ENCODE measurements at regions of chr3 and their contacts with region 1.

Region 1: GRCh38 chr3:128497387-128498126 is 4.6 kb upstream of the GATA2 start:
- DNase-seq: peak; percentile 31 to 83 (median 63)
- ATAC-seq: peak; percentile 64
- H3K4me3 ChIP-seq: peak overlapping the region; percentile 47 to 52
- H3K4me3 Mint-ChIP-seq: peak overlapping the region; percentile 80
- H3K27ac ChIP-seq: no peak overlapping the region
- H3K27ac Mint-ChIP-seq: no peak overlapping the region
- H3K4me1 ChIP-seq: peaks cover 9% of the 10 kb centered on the region
- H3K4me1 Mint-ChIP-seq: peaks cover 9% of the 10 kb centered on the region
- H3K27me3 ChIP-seq: peaks cover 18 to 19% of the 10 kb centered on the region in 2 experiments
- H3K27me3 Mint-ChIP-seq: peaks cover 53% of the 10 kb centered on the region
- CTCF ChIP-seq: peak; percentile 76

Region 2: GRCh38 chr3:128226795-128227395 is 270.7 kb before region 1 on chr3:
- CTCF ChIA-PET with region 1: interaction called, 11 read pairs
- POLR2A ChIA-PET with region 1: no interaction called
- intact Hi-C with region 1: loop called (anchors 2 to 5 kb)
- DNase-seq: peak in 7 of 9 experiments; percentile 10 to 66 (median 26)
- ATAC-seq: peak; percentile 55
- H3K4me3 ChIP-seq: no peak overlapping the region
- H3K4me3 Mint-ChIP-seq: no peak overlapping the region
- H3K27ac ChIP-seq: no peak overlapping the region
- H3K27ac Mint-ChIP-seq: no peak overlapping the region
- H3K4me1 ChIP-seq: no peaks in the 10 kb centered on the region
- H3K4me1 Mint-ChIP-seq: peaks cover 10% of the 10 kb centered on the region
- H3K27me3 ChIP-seq: no peaks in the 10 kb centered on the region
- H3K27me3 Mint-ChIP-seq: no peaks in the 10 kb centered on the region
- CTCF ChIP-seq: peak; percentile 57

Region 3: GRCh38 chr3:128307029-128307633 is 190.4 kb before region 1 on chr3:
- CTCF ChIA-PET with region 1: interaction called, 8 read pairs
- POLR2A ChIA-PET with region 1: no interaction called
- intact Hi-C with region 1: loop called (anchors 2 to 5 kb)
- DNase-seq: peak in 3 of 9 experiments; percentile 9 to 48 (median 39)
- ATAC-seq: no peak
- H3K4me3 ChIP-seq: no peak overlapping the region
- H3K4me3 Mint-ChIP-seq: no peak overlapping the region
- H3K27ac ChIP-seq: no peak overlapping the region
- H3K27ac Mint-ChIP-seq: no peak overlapping the region
- H3K4me1 ChIP-seq: peaks cover 6% of the 10 kb centered on the region
- H3K4me1 Mint-ChIP-seq: peaks cover 28% of the 10 kb centered on the region
- H3K27me3 ChIP-seq: no peaks in the 10 kb centered on the region
- H3K27me3 Mint-ChIP-seq: no peaks in the 10 kb centered on the region
- CTCF ChIP-seq: no peak

Region 4: GRCh38 chr3:128426128-128426921 is 71.2 kb before region 1 on chr3:
- CTCF ChIA-PET with region 1: interaction called, 23 read pairs
- POLR2A ChIA-PET with region 1: no interaction called
- intact Hi-C with region 1: loop called in 1 of 2 experiments (anchors 1 kb)
- DNase-seq: peak in 8 of 9 experiments; percentile 21 to 76 (median 56)
- ATAC-seq: peak; percentile 98
- H3K4me3 ChIP-seq: peak overlapping the region in 1 of 2 experiments; percentile 20
- H3K4me3 Mint-ChIP-seq: no peak overlapping the region
- H3K27ac ChIP-seq: no peak overlapping the region
- H3K27ac Mint-ChIP-seq: no peak overlapping the region
- H3K4me1 ChIP-seq: peaks cover 4% of the 10 kb centered on the region
- H3K4me1 Mint-ChIP-seq: no peaks in the 10 kb centered on the region
- H3K27me3 ChIP-seq: peaks cover 0 to 2% of the 10 kb centered on the region in 2 experiments
- H3K27me3 Mint-ChIP-seq: peaks cover 17% of the 10 kb centered on the region
- CTCF ChIP-seq: peak; percentile 96